HEK293 (cell line): ENCODE measurements at regions of chr1 and their contacts with region 1.

Region 1: GRCh38 chr1:46477153-46477929 is 12.3 kb upstream of the DMBX1 start:
- H3K4me3 ChIP-seq: no peak overlapping the region
- H3K27ac ChIP-seq: no peak overlapping the region
- H3K4me1 ChIP-seq: no peaks in the 10 kb centered on the region
- CTCF ChIP-seq: peak; percentile 49

Region 2: DNA sequence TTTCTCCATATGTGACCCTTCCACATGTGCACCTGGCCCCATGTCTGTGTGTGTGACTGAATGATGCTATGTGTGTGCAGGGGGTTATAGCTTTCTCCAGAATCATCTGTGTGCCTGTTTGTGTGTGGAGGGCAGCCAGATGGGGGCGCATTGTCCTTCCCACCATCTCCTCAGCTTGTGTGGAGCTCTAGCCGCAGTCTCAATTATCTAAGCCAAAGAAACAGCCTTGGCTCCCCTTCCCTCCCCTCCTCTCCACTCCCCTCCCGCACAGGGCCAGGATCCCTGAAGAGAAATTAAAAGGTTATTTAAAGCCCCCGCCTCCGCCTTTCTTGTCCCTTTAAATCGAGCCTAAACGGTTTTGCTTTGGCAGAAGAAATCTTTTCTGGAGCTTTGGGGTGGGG is 10.5 kb after region 1 on chr1:
- CTCF ChIA-PET with region 1: interaction called, 18 read pairs
- POLR2A ChIA-PET with region 1: no interaction called
- H3K4me3 ChIP-seq: no peak overlapping the region
- H3K27ac ChIP-seq: no peak overlapping the region
- H3K4me1 ChIP-seq: no peaks in the 10 kb centered on the region
- CTCF ChIP-seq: 0 out of 2 replicates have a peak, but pooled peaks have one; percentile 40

Region 3: GRCh38 chr1:46522184-46522968 is 45.0 kb after region 1 on chr1:
- CTCF ChIA-PET with region 1: interaction called, 418 read pairs
- POLR2A ChIA-PET with region 1: no interaction called
- H3K4me3 ChIP-seq: no peak overlapping the region
- H3K27ac ChIP-seq: no peak overlapping the region
- H3K4me1 ChIP-seq: peaks cover 5% of the 10 kb centered on the region; the same call in 1 of the 2 replicates
- CTCF ChIP-seq: no peak